Posterior vena cava (tissue), 2 donors: ENCODE measurements at regions of chr1 and their contacts with region 1.

Region 1: DNA sequence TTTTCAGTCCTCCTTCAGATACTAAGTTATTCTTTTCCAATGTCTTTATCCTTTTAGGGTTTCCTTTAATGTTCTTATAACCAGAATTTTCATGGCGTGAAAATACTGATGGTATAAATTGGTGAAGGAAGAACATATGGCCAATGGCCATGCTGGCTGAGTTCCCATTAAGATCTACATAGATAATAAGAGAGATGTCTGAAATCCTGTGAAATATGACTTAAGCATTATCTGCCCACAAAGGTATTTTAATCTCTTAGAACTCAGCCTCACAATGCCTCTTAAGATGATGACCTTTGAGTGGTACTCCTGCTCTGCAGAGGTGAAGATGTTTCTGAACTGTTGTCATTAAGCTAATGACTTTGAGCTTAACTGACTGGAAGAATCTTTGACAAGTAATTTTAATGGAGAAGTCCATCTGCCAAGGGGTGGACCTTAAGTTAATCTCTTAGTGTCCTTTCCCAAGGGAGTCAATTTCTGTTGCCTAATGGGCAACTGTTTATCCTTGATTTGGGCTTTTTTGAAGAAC is 148.7 kb downstream of the ZNF326 start:
- DNase-seq: no peak

Region 2: DNA sequence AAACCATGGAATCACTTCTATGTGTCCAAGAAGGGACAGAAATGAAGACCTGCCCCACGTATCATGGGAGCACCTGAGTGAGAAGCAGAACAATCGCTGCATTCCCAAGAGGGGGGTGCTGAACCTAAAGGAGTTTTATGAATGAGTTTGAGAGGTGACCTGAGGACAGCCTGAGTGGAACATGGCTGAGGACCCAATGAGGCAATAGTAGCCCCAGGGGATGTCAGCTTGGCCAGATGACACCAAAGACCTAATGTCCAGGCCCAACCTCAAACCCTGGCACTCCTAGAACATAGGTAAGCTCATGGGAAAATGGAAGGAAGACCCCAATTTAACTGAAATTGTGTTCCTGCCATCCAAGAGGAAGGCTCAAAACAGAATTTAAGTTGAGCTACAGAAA is 1330.0 kb after region 1 on chr1:
- intact Hi-C with region 1: loop called in 1 of 2 experiments (anchors 5 kb)
- DNase-seq: no peak